Activated CD8-positive, alpha-beta T cell treated with anti-CD3 and anti-CD28 coated beads, Interleukin-2, amount 10 ng/mL, durations not matched to agents 7 days and 5 days (primary cell): ENCODE measurements at regions of chr2 and their contacts with region 1.

Region 1: GRCh38 chr2:96116879-96117697 is 717 bp upstream of the ADRA2B start:
- DNase-seq: peak; percentile 64
- ATAC-seq: peak; percentile 88
- H3K4me3 Mint-ChIP-seq: peak overlapping the region; percentile 40
- H3K27ac Mint-ChIP-seq: no peak overlapping the region
- H3K4me1 Mint-ChIP-seq: peaks cover 30% of the 10 kb centered on the region
- H3K27me3 Mint-ChIP-seq: peaks cover 33% of the 10 kb centered on the region

Region 2: GRCh38 chr2:96024336-96025193 is 92.5 kb before region 1 on chr2:
- CTCF ChIA-PET with region 1: interaction called, 18 read pairs
- POLR2A ChIA-PET with region 1: interaction called, 3 read pairs
- DNase-seq: no peak
- ATAC-seq: no peak
- H3K4me3 Mint-ChIP-seq: no peak overlapping the region
- H3K27ac Mint-ChIP-seq: no peak overlapping the region
- H3K4me1 Mint-ChIP-seq: peaks cover 2% of the 10 kb centered on the region
- H3K27me3 Mint-ChIP-seq: no peaks in the 10 kb centered on the region

Region 3: DNA sequence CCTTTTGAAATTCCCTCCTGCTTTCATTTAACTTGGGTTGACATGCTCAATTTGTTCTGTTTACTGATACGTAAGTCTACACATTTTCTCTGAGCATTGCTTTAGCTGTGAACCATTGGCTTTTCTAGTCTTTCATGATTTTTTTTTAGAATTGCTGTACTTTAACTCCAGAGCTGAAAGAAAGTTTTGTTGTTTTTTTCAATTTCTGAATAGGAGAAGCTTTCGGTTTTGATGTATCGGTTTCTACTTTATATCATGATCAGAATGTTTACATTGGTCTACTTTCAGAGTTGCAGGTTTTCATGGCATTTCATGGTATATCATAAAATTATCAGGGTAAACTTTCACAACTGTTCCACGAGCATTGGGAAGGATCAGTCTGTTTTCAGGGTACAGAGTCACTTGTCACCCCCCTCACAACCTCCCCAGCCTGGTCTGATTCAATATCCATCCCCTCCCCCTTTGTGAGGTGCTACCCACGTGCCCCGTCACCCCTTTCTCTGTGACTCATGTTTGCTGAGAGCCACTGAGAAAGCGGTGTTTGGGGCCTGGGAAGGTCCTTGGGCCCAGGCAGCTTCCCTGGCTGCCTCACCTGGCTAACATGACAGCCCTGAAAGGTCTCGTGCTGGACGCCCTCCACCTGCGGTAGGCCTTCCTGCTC is 14.2 kb after region 1 on chr2:
- CTCF ChIA-PET with region 1: interaction called, 26 read pairs
- POLR2A ChIA-PET with region 1: no interaction called
- DNase-seq: no peak
- ATAC-seq: no peak
- H3K4me3 Mint-ChIP-seq: no peak overlapping the region
- H3K27ac Mint-ChIP-seq: peak overlapping the region; percentile 68
- H3K4me1 Mint-ChIP-seq: peaks cover 21% of the 10 kb centered on the region
- H3K27me3 Mint-ChIP-seq: no peaks in the 10 kb centered on the region